ENCODE measurements at regions of chr18 and their contacts with region 1.

Region 1: DNA sequence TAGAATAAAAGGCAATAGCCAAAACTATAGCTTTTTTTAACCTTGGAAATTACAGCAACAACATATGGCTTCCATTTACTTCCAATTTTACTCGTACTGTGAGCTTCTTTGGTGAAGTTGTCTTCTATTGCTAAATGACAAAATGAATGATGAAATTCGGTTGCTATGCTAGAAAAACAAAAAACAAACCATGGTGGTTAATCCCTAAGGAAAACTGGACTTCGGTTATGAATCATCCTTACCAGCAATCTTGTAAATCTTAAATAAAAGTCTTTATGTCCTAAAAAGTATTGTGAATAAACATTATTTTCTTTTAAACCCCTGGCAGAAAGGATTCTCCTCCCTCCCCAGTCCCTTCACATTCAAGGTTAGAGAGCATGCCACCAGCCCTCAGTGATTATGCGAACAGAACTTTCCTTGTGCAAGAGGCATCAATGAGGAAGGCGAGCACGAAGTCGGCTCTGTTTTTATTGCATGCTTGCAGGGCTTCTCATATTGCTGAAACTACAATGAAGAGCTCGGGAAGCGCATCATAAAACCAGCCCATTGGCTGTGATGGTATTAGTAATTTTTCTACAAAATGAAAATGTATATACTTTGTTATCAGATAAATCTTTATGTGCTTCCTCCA is 62.9 kb downstream of the ZNF521 start:
- DNase-seq: no peak
- ATAC-seq: no peak

Region 2: GRCh38 chr18:25230658-25231326 is 58.3 kb before region 1 on chr18:
- intact Hi-C with region 1: loop called (anchors 10 kb)
- DNase-seq: peak; percentile 73
- ATAC-seq: peak; percentile 88

Region 3: DNA sequence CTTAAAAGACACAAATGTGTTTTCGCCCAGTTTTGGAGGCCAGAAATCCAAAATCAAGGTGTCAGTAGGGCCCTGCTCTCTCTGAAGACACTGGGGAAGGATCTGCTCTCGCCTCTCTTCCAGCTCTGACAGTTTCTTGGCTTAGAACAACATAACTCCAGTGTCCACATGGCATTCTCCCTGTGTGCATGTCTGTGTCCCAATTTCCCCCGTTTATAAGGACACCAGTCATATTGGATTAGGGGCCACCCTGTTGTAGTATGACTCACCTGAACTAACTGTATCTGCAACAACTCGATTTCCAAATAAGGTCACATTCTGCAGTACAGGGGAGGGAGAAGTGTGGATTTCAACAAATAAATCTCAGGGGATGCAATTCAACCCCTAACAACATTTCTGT is 538.1 kb after region 1 on chr18:
- intact Hi-C with region 1: no loop called
- DNase-seq: no peak
- ATAC-seq: no peak